ENCODE measurements at regions of chrX and their contacts with region 1.

Region 1: DNA sequence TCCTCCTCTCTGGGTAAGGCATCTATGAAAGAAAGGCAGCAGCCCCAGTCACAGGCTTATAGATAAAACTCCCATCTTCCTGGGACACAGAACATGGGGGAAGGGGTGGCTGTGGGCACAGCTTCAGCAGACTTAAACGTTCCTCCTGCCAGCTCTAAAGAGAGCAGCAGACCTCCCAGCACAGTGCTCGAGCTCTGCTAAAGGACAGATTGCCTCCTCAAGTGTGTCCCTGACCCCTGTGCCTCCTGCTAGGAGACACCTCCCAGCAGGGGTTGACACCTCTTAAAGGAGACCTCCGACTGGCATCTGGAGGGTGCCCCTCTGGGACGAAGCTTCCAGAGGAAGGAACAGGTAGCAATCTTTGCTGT is 89.9 kb downstream of the EFHC2 start:
- DNase-seq: no peak
- H3K4me3 ChIP-seq: no peak overlapping the region
- H3K4me3 Mint-ChIP-seq: peak overlapping the region in 7 of 8 donors; percentile 75 to 83 (median 81)
- H3K27ac ChIP-seq: peak overlapping the region; percentile 46
- H3K27ac Mint-ChIP-seq: peak overlapping the region; percentile 80 to 96 (median 92)
- H3K4me1 ChIP-seq: peaks cover 31% of the 10 kb centered on the region
- H3K4me1 Mint-ChIP-seq: peaks cover 14 to 61% (median 43%) of the 10 kb centered on the region in 4 donors
- H3K27me3 ChIP-seq: no peaks in the 10 kb centered on the region
- H3K27me3 Mint-ChIP-seq: no peaks in the 10 kb centered on the region

Region 2: GRCh38 chrX:44265559-44265958 is 12.0 kb after region 1 on chrX:
- CTCF ChIA-PET with region 1: interaction called, 3 read pairs
- POLR2A ChIA-PET with region 1: interaction called, 22 read pairs
- intact Hi-C with region 1: no loop called
- DNase-seq: peak in 2 of 5 donors; percentile 22 to 40
- H3K4me3 ChIP-seq: no peak overlapping the region
- H3K4me3 Mint-ChIP-seq: peak overlapping the region; percentile 7 to 82 (median 54)
- H3K27ac ChIP-seq: no peak overlapping the region
- H3K27ac Mint-ChIP-seq: peak overlapping the region; percentile 0 to 80 (median 57)
- H3K4me1 ChIP-seq: peaks cover 35% of the 10 kb centered on the region
- H3K4me1 Mint-ChIP-seq: peaks cover 18 to 47% (median 35%) of the 10 kb centered on the region in 4 donors
- H3K27me3 ChIP-seq: no peaks in the 10 kb centered on the region
- H3K27me3 Mint-ChIP-seq: no peaks in the 10 kb centered on the region

Region 3: GRCh38 chrX:44303119-44303518 is 49.6 kb after region 1 on chrX:
- CTCF ChIA-PET with region 1: interaction called, 10 read pairs
- POLR2A ChIA-PET with region 1: interaction called, 4 read pairs
- intact Hi-C with region 1: no loop called
- DNase-seq: peak in 1 of 5 donors; percentile 8
- H3K4me3 ChIP-seq: no peak overlapping the region
- H3K4me3 Mint-ChIP-seq: no peak overlapping the region
- H3K27ac ChIP-seq: no peak overlapping the region
- H3K27ac Mint-ChIP-seq: peak overlapping the region in 1 of 7 donors; percentile 19
- H3K4me1 ChIP-seq: no peaks in the 10 kb centered on the region
- H3K4me1 Mint-ChIP-seq: peaks cover 0 to 1% (median 0%) of the 10 kb centered on the region in 4 donors
- H3K27me3 ChIP-seq: no peaks in the 10 kb centered on the region
- H3K27me3 Mint-ChIP-seq: no peaks in the 10 kb centered on the region

Region 4: GRCh38 chrX:44382871-44383270 is 129.3 kb after region 1 on chrX:
- CTCF ChIA-PET with region 1: no interaction called
- POLR2A ChIA-PET with region 1: no interaction called
- intact Hi-C with region 1: no loop called
- DNase-seq: no peak
- H3K4me3 ChIP-seq: no peak overlapping the region
- H3K4me3 Mint-ChIP-seq: no peak overlapping the region
- H3K27ac ChIP-seq: no peak overlapping the region
- H3K27ac Mint-ChIP-seq: no peak overlapping the region
- H3K4me1 ChIP-seq: no peaks in the 10 kb centered on the region
- H3K4me1 Mint-ChIP-seq: peaks cover 0 to 6% (median 1%) of the 10 kb centered on the region in 4 donors
- H3K27me3 ChIP-seq: no peaks in the 10 kb centered on the region
- H3K27me3 Mint-ChIP-seq: no peaks in the 10 kb centered on the region

Region 5: GRCh38 chrX:44843318-44843702 is 589.8 kb after region 1 on chrX:
- CTCF ChIA-PET with region 1: no interaction called
- POLR2A ChIA-PET with region 1: no interaction called
- intact Hi-C with region 1: no loop called
- DNase-seq: no peak
- H3K4me3 ChIP-seq: no peak overlapping the region
- H3K4me3 Mint-ChIP-seq: no peak overlapping the region
- H3K27ac ChIP-seq: no peak overlapping the region
- H3K27ac Mint-ChIP-seq: no peak overlapping the region
- H3K4me1 ChIP-seq: no peaks in the 10 kb centered on the region
- H3K4me1 Mint-ChIP-seq: no peaks in the 10 kb centered on the region
- H3K27me3 ChIP-seq: no peaks in the 10 kb centered on the region
- H3K27me3 Mint-ChIP-seq: no peaks in the 10 kb centered on the region

Measured in CD4-positive, alpha-beta memory T cell (primary cell).